H1 (cell line): ENCODE measurements at regions of chr7 and their contacts with region 1.

Region 1: DNA sequence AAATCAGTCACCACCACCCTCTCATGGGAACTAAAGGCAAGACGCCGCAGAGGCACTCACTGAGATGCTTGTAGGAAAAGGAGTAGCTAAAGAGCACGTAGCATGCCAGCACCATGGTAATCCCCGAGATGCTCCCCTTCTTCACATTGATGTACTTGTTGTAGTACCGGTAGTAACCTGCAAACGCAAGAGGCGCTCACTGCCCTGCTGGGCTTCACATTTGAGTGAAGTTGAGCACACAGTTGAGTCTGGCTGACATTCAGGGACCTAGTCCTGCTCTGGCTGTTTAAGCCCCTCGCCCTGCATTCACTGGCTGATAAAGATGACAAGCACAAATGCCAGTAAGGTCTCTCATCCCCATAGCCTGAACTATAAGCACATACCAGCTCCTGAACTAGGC is 6.9 kb downstream of the ATP5MF start:
- DNase-seq: no peak
- H3K4me3 ChIP-seq: no peak overlapping the region
- H3K27ac ChIP-seq: no peak overlapping the region
- H3K4me1 ChIP-seq: no peaks in the 10 kb centered on the region; a peak in 1 of 7 replicates
- H3K27me3 ChIP-seq: no peaks in the 10 kb centered on the region
- CTCF ChIP-seq: peak; percentile 52 to 82 (median 61)
- EP300 ChIP-seq: no peak
- POLR2A ChIP-seq: peak; percentile 41 to 44; a peak in 1 of 3 replicates
- RAD21 ChIP-seq: peak; percentile 40 to 56; a peak in 3 of 4 replicates

Region 2: GRCh38 chr7:99325545-99326407 is 133.3 kb before region 1 on chr7 and contains the start of gene ARPC1A:
- CTCF ChIA-PET with region 1: no interaction called
- POLR2A ChIA-PET with region 1: no interaction called
- DNase-seq: peak; percentile 90 to 96
- H3K4me3 ChIP-seq: peak within 1 kb of the TSS; percentile 70 to 99 (median 94)
- H3K27ac ChIP-seq: peak within 1 kb of the TSS; percentile 74
- H3K4me1 ChIP-seq: no peaks in the 10 kb centered on the region; a peak in 2 of 7 replicates
- H3K27me3 ChIP-seq: no peaks in the 10 kb centered on the region
- CTCF ChIP-seq: peak; percentile 0 to 25 (median 23); a peak in 2 of 4 replicates
- EP300 ChIP-seq: no peak
- POLR2A ChIP-seq: peak; percentile 92 to 93
- RAD21 ChIP-seq: no peak
- total RNA-seq, gene ARPC1A: 147 and 155 TPM in 2 replicates

Region 3: GRCh38 chr7:99447943-99448342 is 11.1 kb before region 1 on chr7:
- CTCF ChIA-PET with region 1: interaction called, 8 read pairs
- POLR2A ChIA-PET with region 1: interaction called, 100 read pairs
- DNase-seq: no peak
- H3K4me3 ChIP-seq: no peak overlapping the region
- H3K27ac ChIP-seq: no peak overlapping the region
- H3K4me1 ChIP-seq: no peaks in the 10 kb centered on the region
- H3K27me3 ChIP-seq: no peaks in the 10 kb centered on the region; a peak in 1 of 7 replicates
- CTCF ChIP-seq: peak in 2 of 3 experiments; percentile 25 to 29; a peak in 2 of 4 replicates
- EP300 ChIP-seq: no peak
- POLR2A ChIP-seq: no peak
- RAD21 ChIP-seq: no peak

Region 4: DNA sequence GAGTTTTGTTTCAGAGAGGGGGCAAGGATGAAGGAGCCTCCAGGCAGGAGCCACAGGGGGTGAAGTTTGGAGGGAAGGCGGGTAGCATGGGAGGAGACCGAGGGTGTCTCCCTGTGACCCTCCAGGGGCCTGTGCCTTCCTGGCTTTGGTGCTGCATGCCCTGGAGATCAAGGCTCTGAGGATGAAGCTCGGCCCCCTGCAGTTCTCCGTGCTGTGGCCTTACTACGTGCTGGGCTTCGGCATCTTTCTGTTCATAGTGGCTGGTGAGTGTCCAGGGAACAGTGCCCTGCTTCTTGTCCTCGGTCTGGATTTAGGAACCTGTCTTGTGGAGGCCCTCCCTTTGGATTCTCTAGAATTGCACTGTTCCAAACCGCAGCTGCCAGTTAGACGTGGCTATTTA is 148.5 kb after region 1 on chr7:
- CTCF ChIA-PET with region 1: no interaction called
- POLR2A ChIA-PET with region 1: no interaction called
- DNase-seq: peak in 1 of 2 experiments; percentile 29
- H3K4me3 ChIP-seq: no peak overlapping the region
- H3K27ac ChIP-seq: no peak overlapping the region
- H3K4me1 ChIP-seq: no peaks in the 10 kb centered on the region
- H3K27me3 ChIP-seq: peaks cover 0 to 3% (median 1%) of the 10 kb centered on the region in 4 experiments; a peak in 1 of 7 replicates
- CTCF ChIP-seq: no peak
- EP300 ChIP-seq: no peak
- POLR2A ChIP-seq: no peak
- RAD21 ChIP-seq: no peak

Region 5: GRCh38 chr7:99767662-99768061 is 308.6 kb after region 1 on chr7:
- CTCF ChIA-PET with region 1: no interaction called
- POLR2A ChIA-PET with region 1: no interaction called
- DNase-seq: no peak
- H3K4me3 ChIP-seq: no peak overlapping the region
- H3K27ac ChIP-seq: no peak overlapping the region
- H3K4me1 ChIP-seq: no peaks in the 10 kb centered on the region
- H3K27me3 ChIP-seq: no peaks in the 10 kb centered on the region
- CTCF ChIP-seq: no peak
- EP300 ChIP-seq: no peak
- POLR2A ChIP-seq: no peak
- RAD21 ChIP-seq: no peak